ENCODE measurements at regions of chr1 and their contacts with region 1.

Region 1: DNA sequence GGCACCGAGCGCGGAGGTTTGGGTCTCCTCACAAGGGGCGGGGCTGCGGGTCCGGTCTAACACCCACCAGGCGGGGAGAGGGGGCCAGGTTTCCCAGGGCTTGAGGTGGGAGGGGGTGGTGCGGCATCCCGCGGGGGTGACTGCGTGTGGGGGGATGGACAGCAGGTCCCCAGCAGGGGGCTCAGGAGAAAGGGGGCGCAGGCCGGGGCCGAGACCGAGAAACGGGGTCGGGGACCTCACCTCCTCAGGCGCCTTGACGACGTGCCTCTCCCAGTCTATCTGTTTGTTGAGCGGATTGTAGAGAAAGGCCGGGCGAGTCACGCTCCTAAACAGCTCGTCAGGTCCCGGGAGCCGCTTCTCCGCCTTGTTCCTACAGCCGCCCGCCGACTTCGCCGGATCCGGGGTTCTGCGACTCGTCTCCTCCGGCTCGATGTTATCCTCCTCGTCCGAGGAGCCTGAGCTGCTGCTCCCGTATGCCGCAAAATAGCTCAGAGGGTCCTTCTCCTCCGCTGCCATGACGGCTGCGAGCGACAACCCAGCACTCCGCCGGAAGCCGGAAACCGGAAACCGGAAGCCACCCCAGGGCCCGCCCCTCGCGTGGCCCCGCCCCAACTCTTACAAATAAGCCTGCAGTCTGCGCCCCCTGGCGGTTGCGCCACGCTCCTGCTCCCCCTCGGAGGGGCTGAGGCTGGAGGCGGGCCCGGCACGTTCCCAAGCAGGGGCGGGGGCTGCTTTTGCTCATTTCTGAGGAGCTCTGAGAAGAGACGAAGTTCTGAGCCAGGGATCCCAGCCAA is at the start of gene C1orf52:
- DNase-seq: peak; percentile 96 to 99 (median 97)
- ATAC-seq: peak; percentile 98
- H3K4me3 ChIP-seq: peak within 1 kb of the TSS; percentile 97
- H3K4me1 ChIP-seq: peaks cover 21% of the 10 kb centered on the region
- CTCF ChIP-seq: peak; percentile 99
- total RNA-seq, gene C1orf52: 17.4 to 24.7 (median 19.2) TPM

Region 2: GRCh38 chr1:84944767-84945486 is 314.4 kb before region 1 on chr1:
- intact Hi-C with region 1: loop called (anchors 5 to 10 kb)
- DNase-seq: peak in 2 of 3 donors; percentile 43 to 77
- ATAC-seq: peak; percentile 99
- H3K4me3 ChIP-seq: no peak overlapping the region
- H3K4me1 ChIP-seq: peaks cover 4% of the 10 kb centered on the region
- CTCF ChIP-seq: peak; percentile 77

Region 3: GRCh38 chr1:84996846-84997666 is 262.3 kb before region 1 on chr1 and contains the start of gene MCOLN2:
- intact Hi-C with region 1: loop called in 1 of 2 experiments (anchors 5 kb)
- DNase-seq: peak; percentile 68 to 77 (median 71)
- ATAC-seq: peak; percentile 94
- H3K4me3 ChIP-seq: no peak within 1 kb of the TSS
- H3K4me1 ChIP-seq: peaks cover 17% of the 10 kb centered on the region
- CTCF ChIP-seq: no peak
- total RNA-seq, gene MCOLN2: 10.8 to 101 (median 66.2) TPM

Region 4: GRCh38 chr1:85048296-85049064 is 210.8 kb before region 1 on chr1 and contains the start of gene MCOLN3:
- intact Hi-C with region 1: no loop called
- DNase-seq: peak; percentile 53 to 70 (median 60)
- ATAC-seq: peak; percentile 80
- H3K4me3 ChIP-seq: peak within 1 kb of the TSS; percentile 24
- H3K4me1 ChIP-seq: peaks cover 7% of the 10 kb centered on the region
- CTCF ChIP-seq: no peak
- total RNA-seq, gene MCOLN3: 0.80 to 2.3 (median 2.2) TPM

Region 5: DNA sequence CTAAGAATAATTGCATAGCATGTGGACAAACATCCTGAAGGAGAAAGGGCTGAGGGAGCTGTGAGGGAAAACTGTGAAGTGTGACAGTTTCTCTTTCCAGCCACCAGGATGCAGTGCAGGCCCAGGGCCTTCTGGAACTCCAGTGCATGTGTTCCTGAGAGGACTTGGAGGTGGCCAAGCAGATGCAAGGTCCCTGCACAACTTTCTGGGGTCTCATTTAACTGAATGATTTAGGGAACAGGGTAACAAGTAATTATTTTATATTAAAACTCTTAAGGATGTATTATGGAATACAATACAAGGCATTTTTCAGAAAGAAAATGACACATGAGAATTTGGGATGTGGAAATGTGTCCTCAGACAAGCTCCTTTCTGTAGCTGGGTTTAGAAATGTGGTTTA is 149.8 kb before region 1 on chr1:
- intact Hi-C with region 1: loop called (anchors 5 kb)
- DNase-seq: peak in 2 of 3 donors; percentile 60 to 63
- ATAC-seq: peak; percentile 94
- H3K4me3 ChIP-seq: no peak overlapping the region
- H3K4me1 ChIP-seq: no peaks in the 10 kb centered on the region
- CTCF ChIP-seq: peak; percentile 69

Region 6: DNA sequence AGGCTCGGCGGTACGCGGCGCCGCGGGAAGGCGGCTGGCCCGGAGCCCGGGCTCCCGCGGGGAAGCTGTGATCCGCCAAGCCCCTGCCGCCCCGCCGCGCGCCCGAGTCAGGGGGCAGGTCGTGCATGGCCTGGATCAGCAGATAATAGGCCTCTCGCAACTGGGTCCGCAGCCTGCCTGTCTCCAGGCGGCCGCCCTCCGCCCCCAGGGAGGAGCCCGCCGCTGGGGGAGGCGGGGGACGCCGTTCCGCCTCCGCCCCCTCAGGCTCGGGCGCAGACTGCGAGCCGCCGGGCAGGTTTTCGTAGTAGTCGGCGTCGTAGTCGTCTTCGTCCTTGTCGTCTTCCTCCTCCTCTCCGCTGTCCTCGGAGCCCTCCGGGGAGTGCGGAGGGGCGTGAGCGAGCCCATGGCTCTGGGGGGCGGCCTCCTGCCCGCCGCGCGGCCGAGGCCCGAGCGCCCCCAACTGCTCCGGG is 58.4 kb before region 1 on chr1 and contains the start of gene SYDE2:
- intact Hi-C with region 1: loop called in 1 of 2 experiments (anchors 10 kb)
- DNase-seq: peak; percentile 79 to 89 (median 87)
- ATAC-seq: peak; percentile 91
- H3K4me3 ChIP-seq: peak within 1 kb of the TSS; percentile 78
- H3K4me1 ChIP-seq: peaks cover 10% of the 10 kb centered on the region
- CTCF ChIP-seq: peak; percentile 4
- total RNA-seq, gene SYDE2: 9.0 to 42.1 (median 9.9) TPM

Region 7: GRCh38 chr1:85427331-85427730 is 168.0 kb after region 1 on chr1:
- intact Hi-C with region 1: no loop called
- DNase-seq: no peak
- ATAC-seq: peak; percentile 17
- H3K4me3 ChIP-seq: no peak overlapping the region
- H3K4me1 ChIP-seq: no peaks in the 10 kb centered on the region
- CTCF ChIP-seq: no peak